ENCODE measurements at regions of chr12 and their contacts with region 1.

Region 1: DNA sequence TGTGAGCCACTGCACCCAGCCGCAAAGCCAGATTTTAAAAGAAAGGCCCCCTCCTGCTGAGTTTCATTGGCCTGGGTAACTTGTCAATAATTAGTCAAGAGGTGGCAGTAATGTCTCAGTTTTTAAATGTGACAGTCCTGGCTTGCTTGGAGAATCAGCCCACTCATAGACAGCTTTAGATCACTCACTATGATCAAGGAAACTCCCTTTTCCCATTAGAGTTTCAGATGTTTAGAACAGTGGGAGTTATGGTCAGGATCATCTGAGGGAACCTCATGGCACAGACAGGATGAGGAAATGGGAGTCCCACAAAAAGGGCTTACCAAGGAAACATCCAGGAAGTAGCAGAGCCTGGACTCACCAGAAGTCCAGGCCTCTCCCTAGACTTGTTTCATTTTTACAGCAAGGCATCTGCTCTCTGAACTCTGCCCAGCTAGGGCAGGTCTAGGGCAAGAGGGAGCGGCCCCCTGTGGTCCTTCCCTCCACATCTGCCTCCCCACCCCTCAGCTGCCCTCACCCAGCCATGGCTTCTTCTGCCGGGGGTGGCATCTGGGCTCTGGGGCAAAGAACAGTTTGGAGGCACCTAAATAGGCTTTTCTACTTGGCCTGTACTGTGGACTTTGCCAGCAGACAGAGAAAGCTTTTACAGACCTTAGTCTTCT is 11.2 kb downstream of the BCL2L14 start:
- DNase-seq: no peak
- ATAC-seq: peak; percentile 36
- H3K4me3 Mint-ChIP-seq: no peak overlapping the region
- H3K27ac Mint-ChIP-seq: no peak overlapping the region
- H3K4me1 Mint-ChIP-seq: peaks cover 4% of the 10 kb centered on the region
- H3K27me3 Mint-ChIP-seq: no peaks in the 10 kb centered on the region

Region 2: DNA sequence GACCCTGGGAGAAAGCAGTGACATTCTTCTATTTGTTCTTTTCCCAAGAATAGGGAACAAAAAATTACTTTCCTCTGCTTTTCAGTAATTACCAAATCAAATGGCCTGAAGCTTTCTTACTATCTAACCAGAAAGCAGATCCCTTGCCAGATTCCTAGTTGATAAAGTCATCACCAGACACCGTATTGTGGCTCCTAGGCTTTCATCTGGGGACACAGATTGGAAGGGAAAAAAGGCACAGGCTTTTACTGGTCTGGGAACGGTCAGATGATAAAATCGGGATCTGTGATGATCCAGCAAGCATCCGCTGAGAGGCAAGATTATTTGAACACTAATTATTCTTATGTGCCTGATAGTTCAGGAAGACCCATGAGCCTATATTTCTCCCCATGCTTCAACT is 90.4 kb before region 1 on chr12:
- CTCF ChIA-PET with region 1: no interaction called
- POLR2A ChIA-PET with region 1: no interaction called
- DNase-seq: no peak
- ATAC-seq: no peak
- H3K4me3 Mint-ChIP-seq: no peak overlapping the region
- H3K27ac Mint-ChIP-seq: no peak overlapping the region
- H3K4me1 Mint-ChIP-seq: peaks cover 6% of the 10 kb centered on the region
- H3K27me3 Mint-ChIP-seq: no peaks in the 10 kb centered on the region

Region 3: GRCh38 chr12:12327802-12328201 is 245.8 kb after region 1 on chr12:
- CTCF ChIA-PET with region 1: interaction called, 30 read pairs
- POLR2A ChIA-PET with region 1: no interaction called
- DNase-seq: peak; percentile 46
- ATAC-seq: peak; percentile 55
- H3K4me3 Mint-ChIP-seq: no peak overlapping the region
- H3K27ac Mint-ChIP-seq: no peak overlapping the region
- H3K4me1 Mint-ChIP-seq: peaks cover 7% of the 10 kb centered on the region
- H3K27me3 Mint-ChIP-seq: peaks cover 17% of the 10 kb centered on the region